CD8-positive, alpha-beta T cell (primary cell): ENCODE measurements at regions of chr13 and their contacts with region 1.

Region 1: GRCh38 chr13:46211483-46212351 is at the start of gene LRRC63:
- DNase-seq: peak; percentile 58 to 91 (median 84)
- ATAC-seq: peak; percentile 92
- H3K4me3 ChIP-seq: peak within 1 kb of the TSS; percentile 69 to 73
- H3K4me3 Mint-ChIP-seq: peak within 1 kb of the TSS; percentile 86
- H3K27ac ChIP-seq: peak within 1 kb of the TSS; percentile 74 to 90
- H3K27ac Mint-ChIP-seq: peak within 1 kb of the TSS; percentile 93
- H3K4me1 ChIP-seq: peaks cover 13% of the 10 kb centered on the region
- H3K4me1 Mint-ChIP-seq: peaks cover 19% of the 10 kb centered on the region
- H3K27me3 ChIP-seq: no peaks in the 10 kb centered on the region
- H3K27me3 Mint-ChIP-seq: no peaks in the 10 kb centered on the region
- CTCF ChIP-seq: no peak
- total RNA-seq, gene LRRC63: 0.22 to 0.31 TPM

Region 2: GRCh38 chr13:46176756-46177155 is 35.0 kb before region 1 on chr13:
- CTCF ChIA-PET with region 1: interaction called, 5 read pairs
- POLR2A ChIA-PET with region 1: interaction called, 10 read pairs
- intact Hi-C with region 1: no loop called
- DNase-seq: peak in 1 of 9 experiments; percentile 62
- ATAC-seq: no peak
- H3K4me3 ChIP-seq: peak overlapping the region; percentile 40
- H3K4me3 Mint-ChIP-seq: peak overlapping the region; percentile 79
- H3K27ac ChIP-seq: peak overlapping the region; percentile 51 to 94
- H3K27ac Mint-ChIP-seq: peak overlapping the region; percentile 94
- H3K4me1 ChIP-seq: peaks cover 66% of the 10 kb centered on the region
- H3K4me1 Mint-ChIP-seq: peaks cover 66% of the 10 kb centered on the region
- H3K27me3 ChIP-seq: no peaks in the 10 kb centered on the region
- H3K27me3 Mint-ChIP-seq: no peaks in the 10 kb centered on the region
- CTCF ChIP-seq: no peak

Region 3: DNA sequence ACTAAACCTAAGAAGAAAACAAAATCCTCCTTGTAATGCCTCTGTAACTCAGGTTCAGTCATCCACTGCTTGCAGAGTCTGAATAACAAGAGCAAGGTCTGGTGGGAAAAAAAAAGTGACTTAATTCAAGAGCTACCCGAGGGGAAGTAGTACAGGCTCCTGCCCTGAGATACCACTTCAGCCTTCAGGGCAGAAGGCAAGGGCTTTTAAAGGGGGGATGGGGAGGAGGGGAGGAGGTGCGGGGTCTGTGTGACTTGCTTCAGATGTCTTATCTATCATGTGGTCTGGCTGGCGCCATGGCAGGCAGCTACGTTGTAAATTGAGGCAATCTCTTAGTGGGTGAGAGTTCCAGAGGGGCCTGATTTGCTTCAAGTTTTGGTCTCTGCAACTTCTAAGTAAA is 66.8 kb after region 1 on chr13:
- CTCF ChIA-PET with region 1: no interaction called
- POLR2A ChIA-PET with region 1: no interaction called
- intact Hi-C with region 1: loop called in 1 of 2 experiments (anchors 5 kb)
- DNase-seq: no peak
- ATAC-seq: no peak
- H3K4me3 ChIP-seq: no peak overlapping the region
- H3K4me3 Mint-ChIP-seq: no peak overlapping the region
- H3K27ac ChIP-seq: no peak overlapping the region
- H3K27ac Mint-ChIP-seq: peak overlapping the region; percentile 14
- H3K4me1 ChIP-seq: no peaks in the 10 kb centered on the region
- H3K4me1 Mint-ChIP-seq: peaks cover 5% of the 10 kb centered on the region
- H3K27me3 ChIP-seq: no peaks in the 10 kb centered on the region
- H3K27me3 Mint-ChIP-seq: no peaks in the 10 kb centered on the region
- CTCF ChIP-seq: no peak

Region 4: DNA sequence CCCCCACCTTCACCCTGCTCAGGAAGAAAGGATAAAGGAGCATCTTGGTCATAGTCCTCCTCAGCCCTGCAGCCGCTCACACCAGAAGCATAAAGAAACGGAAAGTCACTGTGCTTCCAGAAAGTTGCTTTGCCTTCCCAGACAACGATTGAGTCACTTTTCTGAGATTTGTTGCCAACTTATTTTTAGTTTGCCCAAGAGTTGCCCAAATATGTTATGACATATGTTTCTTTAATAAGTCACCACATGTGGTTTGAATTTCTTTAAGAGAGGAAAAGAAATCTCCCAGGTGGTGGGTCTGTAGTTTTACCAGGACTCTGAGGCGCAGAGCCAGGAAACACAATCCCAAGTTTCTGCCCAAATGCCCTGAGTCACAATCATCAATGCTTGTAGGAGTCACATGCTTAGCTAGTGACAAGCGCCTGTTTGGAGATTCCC is 277.9 kb after region 1 on chr13:
- CTCF ChIA-PET with region 1: no interaction called
- POLR2A ChIA-PET with region 1: no interaction called
- intact Hi-C with region 1: no loop called
- DNase-seq: no peak
- ATAC-seq: no peak
- H3K4me3 ChIP-seq: no peak overlapping the region
- H3K4me3 Mint-ChIP-seq: no peak overlapping the region
- H3K27ac ChIP-seq: no peak overlapping the region
- H3K27ac Mint-ChIP-seq: no peak overlapping the region
- H3K4me1 ChIP-seq: no peaks in the 10 kb centered on the region
- H3K4me1 Mint-ChIP-seq: no peaks in the 10 kb centered on the region
- H3K27me3 ChIP-seq: no peaks in the 10 kb centered on the region
- H3K27me3 Mint-ChIP-seq: peaks cover 3% of the 10 kb centered on the region
- CTCF ChIP-seq: no peak